T-cell (primary cell): ENCODE measurements at regions of chr11 and their contacts with region 1.

Region 1: GRCh38 chr11:96012086-96012824 is 88.3 kb upstream of the MTMR2 start:
- DNase-seq: peak in 34 of 35 experiments; percentile 3 to 81 (median 48)
- ATAC-seq: peak; percentile 71 to 83 (median 78)
- H3K4me3 ChIP-seq: peak overlapping the region; percentile 6 to 51
- H3K4me3 Mint-ChIP-seq: peak overlapping the region; percentile 47 to 68 (median 60)
- H3K27ac ChIP-seq: peak overlapping the region; percentile 65
- H3K27ac Mint-ChIP-seq: peak overlapping the region; percentile 91
- H3K4me1 ChIP-seq: peaks cover 27 to 57% of the 10 kb centered on the region in 2 experiments
- H3K4me1 Mint-ChIP-seq: peaks cover 0 to 69% (median 66%) of the 10 kb centered on the region in 3 donors
- H3K27me3 ChIP-seq: no peaks in the 10 kb centered on the region
- H3K27me3 Mint-ChIP-seq: no peaks in the 10 kb centered on the region

Region 2: GRCh38 chr11:96073536-96073935 is 61.3 kb after region 1 on chr11:
- CTCF ChIA-PET with region 1: interaction called in 1 of 2 experiments, 6 read pairs
- POLR2A ChIA-PET with region 1: interaction called in 1 of 2 experiments, 12 read pairs
- DNase-seq: no peak
- ATAC-seq: no peak
- H3K4me3 ChIP-seq: no peak overlapping the region
- H3K4me3 Mint-ChIP-seq: no peak overlapping the region
- H3K27ac ChIP-seq: no peak overlapping the region
- H3K27ac Mint-ChIP-seq: no peak overlapping the region
- H3K4me1 ChIP-seq: peaks cover 0 to 8% of the 10 kb centered on the region in 2 experiments
- H3K4me1 Mint-ChIP-seq: peaks cover 44 to 62% (median 58%) of the 10 kb centered on the region in 3 donors
- H3K27me3 ChIP-seq: no peaks in the 10 kb centered on the region
- H3K27me3 Mint-ChIP-seq: no peaks in the 10 kb centered on the region

Region 3: DNA sequence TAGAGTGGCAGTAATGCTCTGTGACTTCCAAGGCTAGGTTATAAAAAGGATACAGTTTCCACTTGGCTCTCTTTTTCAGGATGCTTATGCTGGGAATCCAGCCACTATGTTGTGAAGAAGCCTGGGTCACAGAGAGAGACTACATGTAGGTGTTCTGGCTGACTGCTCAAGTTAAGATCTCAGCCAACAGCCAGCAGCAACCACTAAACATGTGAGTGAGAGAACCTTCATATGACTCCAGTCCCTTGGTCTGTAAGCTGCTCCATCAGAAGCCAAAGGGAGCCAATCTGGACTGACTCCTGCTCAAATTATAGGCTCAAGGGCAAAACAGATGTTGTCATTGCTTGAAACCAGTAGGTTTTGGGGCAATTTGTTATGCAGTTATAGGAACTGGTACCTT is 168.1 kb after region 1 on chr11:
- CTCF ChIA-PET with region 1: no interaction called
- POLR2A ChIA-PET with region 1: no interaction called
- DNase-seq: no peak
- ATAC-seq: no peak
- H3K4me3 ChIP-seq: no peak overlapping the region
- H3K4me3 Mint-ChIP-seq: no peak overlapping the region
- H3K27ac ChIP-seq: no peak overlapping the region
- H3K27ac Mint-ChIP-seq: peak overlapping the region; percentile 28 to 53
- H3K4me1 ChIP-seq: peaks cover 7 to 14% of the 10 kb centered on the region in 2 experiments
- H3K4me1 Mint-ChIP-seq: peaks cover 69 to 80% (median 74%) of the 10 kb centered on the region in 3 donors
- H3K27me3 ChIP-seq: no peaks in the 10 kb centered on the region
- H3K27me3 Mint-ChIP-seq: no peaks in the 10 kb centered on the region